Mammary epithelial cell (primary cell): ENCODE measurements at regions of chr16 and their contacts with region 1.

Region 1: GRCh38 chr16:56600398-56600999 is 7.9 kb upstream of the MT2A start:
- DNase-seq: peak; percentile 48
- H3K4me3 ChIP-seq: no peak overlapping the region
- H3K27ac ChIP-seq: no peak overlapping the region
- H3K4me1 ChIP-seq: peaks cover 6% of the 10 kb centered on the region
- H3K27me3 ChIP-seq: no peaks in the 10 kb centered on the region
- CTCF ChIP-seq: peak; percentile 75 to 79

Region 2: GRCh38 chr16:56513972-56514371 is 86.5 kb before region 1 on chr16:
- CTCF ChIA-PET with region 1: no interaction called
- dilution Hi-C with region 1: no loop called
- in situ Hi-C with region 1: loop called in 1 of 2 experiments (anchors 10 kb)
- intact Hi-C with region 1: loop called (anchors 1 kb)
- DNase-seq: peak; percentile 59
- H3K4me3 ChIP-seq: no peak overlapping the region
- H3K27ac ChIP-seq: no peak overlapping the region
- H3K4me1 ChIP-seq: peaks cover 33% of the 10 kb centered on the region
- H3K27me3 ChIP-seq: no peaks in the 10 kb centered on the region
- CTCF ChIP-seq: peak; percentile 79 to 80

Region 3: GRCh38 chr16:56525236-56525635 is 75.3 kb before region 1 on chr16:
- CTCF ChIA-PET with region 1: no interaction called
- dilution Hi-C with region 1: no loop called
- in situ Hi-C with region 1: no loop called
- intact Hi-C with region 1: no loop called
- DNase-seq: no peak
- H3K4me3 ChIP-seq: no peak overlapping the region
- H3K27ac ChIP-seq: no peak overlapping the region
- H3K4me1 ChIP-seq: peaks cover 10% of the 10 kb centered on the region
- H3K27me3 ChIP-seq: no peaks in the 10 kb centered on the region
- CTCF ChIP-seq: no peak

Region 4: GRCh38 chr16:56657555-56658326 is 57.2 kb after region 1 on chr16 and contains the start of gene MT1F:
- CTCF ChIA-PET with region 1: no interaction called
- dilution Hi-C with region 1: loop called (anchors 5 kb)
- in situ Hi-C with region 1: no loop called
- intact Hi-C with region 1: loop called (anchors 1 kb)
- DNase-seq: peak; percentile 89
- H3K4me3 ChIP-seq: peak within 1 kb of the TSS; percentile 44 to 69 (median 65)
- H3K27ac ChIP-seq: peak within 1 kb of the TSS; percentile 6
- H3K4me1 ChIP-seq: peaks cover 17% of the 10 kb centered on the region
- H3K27me3 ChIP-seq: no peaks in the 10 kb centered on the region
- CTCF ChIP-seq: no peak
- total RNA-seq, gene MT1F: 4.2 to 8.6 TPM

Region 5: DNA sequence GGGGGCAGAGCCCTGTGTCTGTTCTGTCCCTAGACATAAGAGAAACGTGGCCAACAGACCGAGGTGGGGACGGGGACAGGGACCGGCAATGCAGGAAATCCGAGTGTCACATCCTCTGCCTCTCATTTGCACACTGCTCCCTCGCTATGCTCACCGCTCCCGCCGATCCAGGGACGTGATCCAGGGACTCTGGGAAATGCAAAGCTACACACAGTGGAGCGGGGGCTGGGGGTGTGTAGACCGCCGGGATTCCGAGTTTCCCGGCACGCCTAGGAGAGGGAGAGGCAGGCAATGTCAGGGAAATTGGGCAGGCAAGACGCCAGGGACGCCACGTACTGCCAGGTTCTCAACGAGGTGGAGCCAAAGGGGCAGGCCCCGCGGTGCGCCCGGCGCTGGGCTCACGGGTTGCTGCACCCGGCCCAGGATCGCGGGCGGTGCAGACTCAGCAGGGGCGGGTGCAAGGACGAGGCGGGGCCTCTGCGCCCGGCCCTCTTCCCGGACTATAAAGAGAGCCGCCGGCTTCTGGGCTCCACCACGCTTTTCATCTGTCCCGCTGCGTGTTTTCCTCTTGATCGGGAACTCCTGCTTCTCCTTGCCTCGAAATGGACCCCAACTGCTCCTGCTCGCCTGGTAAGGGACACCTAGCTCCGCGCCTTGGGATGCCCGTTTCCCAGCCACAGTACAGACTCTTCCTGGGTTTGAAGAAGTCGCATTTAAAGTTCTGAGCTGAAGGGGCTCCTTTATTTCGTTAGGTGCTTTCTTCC is 81.6 kb after region 1 on chr16 and contains the start of gene MT1X:
- CTCF ChIA-PET with region 1: interaction called, 14 read pairs
- dilution Hi-C with region 1: no loop called
- in situ Hi-C with region 1: no loop called
- intact Hi-C with region 1: loop called (anchors 5 kb)
- DNase-seq: peak; percentile 93
- H3K4me3 ChIP-seq: peak within 1 kb of the TSS; percentile 69 to 85 (median 76)
- H3K27ac ChIP-seq: peak within 1 kb of the TSS; percentile 61
- H3K4me1 ChIP-seq: peaks cover 41% of the 10 kb centered on the region
- H3K27me3 ChIP-seq: no peaks in the 10 kb centered on the region
- CTCF ChIP-seq: no peak
- total RNA-seq, gene MT1X: 85.4 to 591 TPM